Right cardiac atrium (tissue), 5 donors: ENCODE measurements at regions of chr7 and their contacts with region 1.

Region 1: DNA sequence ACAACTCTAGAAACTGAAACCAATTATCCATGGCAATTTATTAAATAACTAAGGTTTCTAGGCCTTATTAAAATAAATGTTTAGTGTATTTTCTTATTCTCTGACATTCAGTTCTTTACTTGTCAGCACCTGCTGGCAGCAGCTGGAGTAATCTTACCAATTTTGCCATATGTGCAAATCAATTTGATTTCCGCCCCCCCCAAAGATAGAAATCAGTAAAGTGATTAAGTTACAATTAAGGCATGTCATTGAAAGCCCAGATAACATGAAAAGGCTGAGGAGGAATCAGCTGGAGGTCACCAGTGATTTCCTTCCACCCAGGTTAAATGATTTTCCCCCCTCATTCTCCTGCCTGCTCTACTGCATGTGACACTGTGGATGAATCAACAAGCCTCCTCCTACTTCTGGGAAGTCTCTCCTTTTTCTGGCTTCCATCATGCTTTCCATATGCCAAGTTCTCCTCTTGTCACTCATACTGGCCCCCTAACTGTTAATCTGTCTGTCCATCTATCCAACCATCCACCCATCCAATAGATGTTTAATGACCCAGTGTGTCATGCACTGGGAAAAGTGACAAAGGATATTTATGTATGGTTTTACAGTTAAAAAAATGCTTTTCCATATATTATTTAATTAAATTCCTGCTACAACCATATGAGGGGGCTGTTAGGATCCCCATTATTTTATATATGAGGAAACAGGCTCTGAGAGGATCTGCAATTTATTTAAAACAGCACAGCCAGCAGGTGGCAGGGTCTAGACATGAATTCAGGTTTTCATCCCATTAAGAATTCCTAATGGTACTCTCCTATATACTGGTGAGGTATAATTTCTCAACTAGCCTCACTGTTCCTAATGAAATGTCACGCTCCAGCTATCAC is 116.5 kb downstream of the ATXN7L1 start:
- DNase-seq: peak in 2 of 3 donors; percentile 42 to 84
- ATAC-seq: peak; percentile 61 to 66
- H3K4me3 ChIP-seq: no peak overlapping the region
- H3K27ac ChIP-seq: no peak overlapping the region
- H3K4me1 ChIP-seq: no peaks in the 10 kb centered on the region
- H3K27me3 ChIP-seq: no peaks in the 10 kb centered on the region

Region 2: DNA sequence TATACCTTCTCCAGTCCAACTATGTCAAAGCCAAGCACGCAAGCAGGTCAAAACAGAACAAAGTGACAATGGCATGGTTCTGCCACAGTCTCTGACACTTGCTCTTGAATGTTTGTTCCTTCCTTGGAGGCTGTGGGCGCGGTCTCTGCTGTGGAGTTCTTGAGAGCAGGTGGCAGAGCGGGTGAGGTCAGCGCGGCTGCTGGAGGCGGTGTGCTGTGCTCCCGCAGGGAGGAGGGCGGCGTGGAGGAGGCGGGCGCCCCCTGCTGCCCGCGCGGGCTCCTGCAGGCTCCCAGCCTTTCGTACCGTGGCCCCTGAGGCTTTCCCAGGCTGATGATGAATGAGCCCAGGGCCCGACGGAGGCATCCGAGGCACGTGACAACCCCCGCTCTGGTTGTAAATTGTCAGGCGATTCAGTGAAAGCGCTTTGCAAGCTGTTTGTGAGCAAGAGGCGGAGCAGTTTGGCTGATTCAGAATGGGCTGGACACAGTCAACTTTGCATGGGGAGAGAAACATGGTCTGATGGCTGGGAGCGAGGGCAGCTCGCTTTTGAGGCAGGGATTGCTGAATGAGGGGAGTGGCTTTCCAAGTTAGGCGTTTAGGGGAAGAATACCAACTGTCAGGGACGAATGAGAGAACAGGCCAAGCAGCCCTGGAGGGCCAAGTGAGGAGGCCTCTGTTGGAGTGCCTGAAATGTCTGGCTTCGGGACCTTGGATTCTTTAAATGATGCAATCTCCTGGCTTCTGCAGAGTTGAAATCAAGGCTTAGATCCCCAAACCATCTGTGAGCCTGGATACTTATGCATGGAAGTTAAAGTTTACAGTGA is 249.7 kb after region 1 on chr7:
- intact Hi-C with region 1: loop called in 3 of 4 experiments (anchors 10 kb)
- DNase-seq: peak; percentile 77 to 90 (median 89)
- ATAC-seq: peak; percentile 94 to 98
- H3K4me3 ChIP-seq: no peak overlapping the region
- H3K27ac ChIP-seq: no peak overlapping the region
- H3K4me1 ChIP-seq: no peaks in the 10 kb centered on the region
- H3K27me3 ChIP-seq: no peaks in the 10 kb centered on the region

Region 3: GRCh38 chr7:106041140-106041717 is 281.3 kb after region 1 on chr7:
- intact Hi-C with region 1: loop called (anchors 5 to 10 kb)
- DNase-seq: no peak
- ATAC-seq: no peak
- H3K4me3 ChIP-seq: no peak overlapping the region
- H3K27ac ChIP-seq: no peak overlapping the region
- H3K4me1 ChIP-seq: no peaks in the 10 kb centered on the region
- H3K27me3 ChIP-seq: no peaks in the 10 kb centered on the region